ENCODE measurements at regions of chr17 and their contacts with region 1.

Region 1: DNA sequence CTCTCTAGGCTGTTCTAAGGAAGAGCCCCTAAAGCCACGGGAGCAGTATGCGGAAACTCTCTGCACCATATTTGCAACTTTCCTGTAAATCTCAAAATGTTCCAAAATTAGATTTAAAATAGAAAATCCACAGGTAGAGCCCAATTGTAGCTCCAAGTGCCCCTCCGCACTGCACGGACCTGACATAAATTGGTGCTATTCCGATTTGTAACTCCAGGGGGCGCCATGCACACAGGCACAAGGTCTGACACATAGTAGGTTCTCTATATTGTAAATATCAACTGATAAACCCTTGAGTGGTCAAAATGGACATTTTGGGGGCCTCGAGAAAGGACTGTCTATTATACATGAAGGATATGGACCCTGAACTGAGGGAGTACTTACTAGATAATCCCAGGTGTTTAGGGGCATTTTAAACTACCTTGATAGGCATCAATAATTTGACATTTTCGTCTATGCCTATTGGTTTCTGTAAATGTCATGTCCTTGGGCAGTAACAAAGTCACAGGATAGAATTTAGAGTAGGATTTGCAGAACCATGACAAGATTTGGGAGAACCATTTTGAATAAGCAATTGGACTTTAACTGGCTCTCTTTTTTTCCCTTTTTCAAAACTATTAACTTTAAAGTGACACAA is 36.6 kb upstream of the TMEM132E start:
- DNase-seq: no peak
- ATAC-seq: peak; percentile 79
- H3K4me3 ChIP-seq: no peak overlapping the region
- H3K27ac ChIP-seq: no peak overlapping the region
- H3K4me1 ChIP-seq: no peaks in the 10 kb centered on the region
- H3K27me3 ChIP-seq: peaks cover 24% of the 10 kb centered on the region
- CTCF ChIP-seq: peak; percentile 95

Region 2: GRCh38 chr17:34443619-34444469 is 99.0 kb before region 1 on chr17:
- CTCF ChIA-PET with region 1: no interaction called
- POLR2A ChIA-PET with region 1: no interaction called
- in situ Hi-C with region 1: no loop called
- intact Hi-C with region 1: no loop called
- DNase-seq: no peak
- ATAC-seq: peak; percentile 89
- H3K4me3 ChIP-seq: no peak overlapping the region
- H3K27ac ChIP-seq: no peak overlapping the region
- H3K4me1 ChIP-seq: no peaks in the 10 kb centered on the region
- H3K27me3 ChIP-seq: peaks cover 12% of the 10 kb centered on the region; the same call in 1 of the 2 replicates
- CTCF ChIP-seq: peak; percentile 72

Region 3: DNA sequence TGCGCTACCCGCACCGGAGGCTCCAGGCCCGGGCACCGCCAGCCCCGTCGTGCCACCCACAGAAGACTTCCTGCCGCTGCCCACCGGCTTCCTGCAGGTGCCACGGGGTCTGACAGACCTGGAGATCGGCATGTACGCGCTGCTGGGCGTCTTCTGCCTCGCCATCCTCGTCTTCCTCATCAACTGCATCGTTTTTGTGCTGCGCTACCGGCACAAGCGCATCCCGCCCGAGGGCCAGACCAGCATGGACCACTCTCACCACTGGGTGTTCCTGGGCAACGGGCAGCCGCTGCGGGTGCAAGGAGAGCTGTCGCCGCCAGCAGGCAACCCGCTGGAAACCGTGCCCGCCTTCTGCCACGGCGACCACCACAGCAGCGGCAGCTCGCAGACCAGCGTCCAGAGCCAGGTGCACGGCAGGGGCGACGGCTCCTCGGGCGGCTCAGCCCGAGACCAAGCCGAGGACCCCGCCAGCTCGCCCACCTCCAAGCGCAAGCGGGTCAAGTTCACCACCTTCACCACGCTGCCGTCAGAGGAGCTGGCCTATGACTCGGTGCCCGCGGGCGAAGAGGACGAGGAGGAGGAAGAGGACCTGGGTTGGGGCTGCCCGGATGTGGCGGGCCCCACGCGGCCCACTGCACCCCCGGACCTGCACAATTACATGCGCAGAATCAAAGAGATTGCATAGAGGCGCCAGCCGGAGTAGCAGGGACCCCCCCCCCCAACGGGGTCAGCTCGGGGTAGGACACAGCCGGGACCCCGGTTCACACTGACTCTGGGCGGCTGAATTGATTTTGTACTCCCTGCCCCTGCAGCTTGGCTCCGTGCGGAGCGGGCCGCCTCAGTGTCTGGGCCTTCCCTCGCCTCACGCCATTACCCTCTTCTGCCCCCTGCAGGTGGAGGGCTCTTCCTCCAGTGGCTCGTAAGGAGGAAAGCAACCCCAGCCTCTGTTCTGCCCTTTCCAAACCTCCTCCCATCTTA is 95.0 kb after region 1 on chr17:
- CTCF ChIA-PET with region 1: interaction called, 7 read pairs
- POLR2A ChIA-PET with region 1: no interaction called
- in situ Hi-C with region 1: no loop called
- intact Hi-C with region 1: loop called (anchors 1 kb)
- DNase-seq: peak; percentile 25
- ATAC-seq: peak; percentile 95
- H3K4me3 ChIP-seq: no peak overlapping the region
- H3K27ac ChIP-seq: no peak overlapping the region
- H3K4me1 ChIP-seq: no peaks in the 10 kb centered on the region
- H3K27me3 ChIP-seq: peaks cover 9% of the 10 kb centered on the region; the same call in 1 of the 2 replicates
- CTCF ChIP-seq: peak; percentile 92

Region 4: GRCh38 chr17:34726536-34727384 is 183.9 kb after region 1 on chr17:
- CTCF ChIA-PET with region 1: interaction called, 15 read pairs
- POLR2A ChIA-PET with region 1: no interaction called
- in situ Hi-C with region 1: no loop called
- intact Hi-C with region 1: no loop called
- DNase-seq: no peak
- ATAC-seq: no peak
- H3K4me3 ChIP-seq: no peak overlapping the region
- H3K27ac ChIP-seq: no peak overlapping the region
- H3K4me1 ChIP-seq: peaks cover under 1% of the 10 kb centered on the region; the same call in 1 of the 2 replicates
- H3K27me3 ChIP-seq: no peaks in the 10 kb centered on the region
- CTCF ChIP-seq: no peak

Region 5: GRCh38 chr17:34892461-34893249 is 349.8 kb after region 1 on chr17:
- CTCF ChIA-PET with region 1: no interaction called
- POLR2A ChIA-PET with region 1: no interaction called
- in situ Hi-C with region 1: no loop called
- intact Hi-C with region 1: loop called (anchors 1 kb)
- DNase-seq: no peak
- ATAC-seq: peak; percentile 83
- H3K4me3 ChIP-seq: no peak overlapping the region
- H3K27ac ChIP-seq: no peak overlapping the region
- H3K4me1 ChIP-seq: no peaks in the 10 kb centered on the region
- H3K27me3 ChIP-seq: peaks cover 3% of the 10 kb centered on the region
- CTCF ChIP-seq: peak; percentile 87

Region 6: GRCh38 chr17:34961093-34961911 is 418.5 kb after region 1 on chr17 and contains the starts of genes CCT6B and ZNF830:
- CTCF ChIA-PET with region 1: no interaction called
- POLR2A ChIA-PET with region 1: no interaction called
- in situ Hi-C with region 1: no loop called
- intact Hi-C with region 1: loop called (anchors 10 kb)
- DNase-seq: peak; percentile 78
- ATAC-seq: peak; percentile 98
- H3K4me3 ChIP-seq: peak within 1 kb of the TSS; percentile 98 to 99
- H3K27ac ChIP-seq: peak within 1 kb of the TSS; percentile 96
- H3K4me1 ChIP-seq: peaks cover 15% of the 10 kb centered on the region; the same call in 1 of the 2 replicates
- H3K27me3 ChIP-seq: no peaks in the 10 kb centered on the region; the same call in 1 of the 2 replicates
- CTCF ChIP-seq: no peak
- total RNA-seq, gene CCT6B: 1.5 TPM
- total RNA-seq, gene ZNF830: 17.5 TPM

Region 7: DNA sequence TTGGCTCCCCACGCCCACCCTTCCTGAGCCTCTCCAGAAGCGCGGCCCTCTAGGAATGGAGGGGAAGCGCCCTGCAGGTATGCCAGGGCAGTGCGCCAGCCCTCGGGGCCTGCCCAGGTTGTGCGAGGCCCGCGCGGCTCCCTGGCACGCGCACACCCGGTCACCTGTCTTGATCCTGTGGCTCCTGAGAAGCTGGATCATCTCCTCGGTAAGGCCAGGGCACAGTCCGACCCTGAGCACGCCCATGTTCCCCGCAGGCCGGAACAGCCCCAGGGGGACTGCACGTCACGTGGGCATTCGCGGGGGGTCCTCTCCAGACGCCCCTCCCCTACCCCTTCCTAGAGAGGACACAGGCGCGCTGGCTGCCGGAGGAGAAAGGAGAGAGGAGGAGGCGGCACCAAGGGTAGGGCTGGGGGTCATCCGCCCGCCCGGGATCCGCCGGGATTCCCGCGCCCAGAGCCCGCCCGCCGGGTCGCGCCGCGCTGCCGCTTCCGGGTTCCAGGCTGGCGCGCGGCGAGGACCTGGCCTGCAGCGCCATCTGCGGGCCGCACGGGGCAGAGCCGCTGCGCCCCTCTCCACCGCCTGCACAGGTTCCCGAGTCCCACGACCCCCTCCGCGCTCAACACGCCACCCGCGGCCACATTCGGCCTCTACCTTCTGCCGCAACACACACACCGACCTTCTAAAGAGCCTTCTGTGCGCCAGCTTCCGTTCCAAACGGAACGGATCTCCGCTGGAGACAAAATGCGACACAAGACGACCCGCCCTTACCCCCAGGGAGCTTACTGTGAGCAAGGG is 576.7 kb after region 1 on chr17 and contains the start of gene RAD51D:
- CTCF ChIA-PET with region 1: no interaction called
- POLR2A ChIA-PET with region 1: no interaction called
- in situ Hi-C with region 1: no loop called
- intact Hi-C with region 1: loop called (anchors 5 kb)
- DNase-seq: no peak
- ATAC-seq: peak; percentile 97
- H3K4me3 ChIP-seq: peak within 1 kb of the TSS; percentile 68 to 71
- H3K27ac ChIP-seq: peak within 1 kb of the TSS; percentile 81
- H3K4me1 ChIP-seq: peaks cover 11% of the 10 kb centered on the region; the same call in 1 of the 2 replicates
- H3K27me3 ChIP-seq: no peaks in the 10 kb centered on the region
- CTCF ChIP-seq: peak; percentile 98
- total RNA-seq, gene RAD51D: 25.9 TPM

Measured in Panc1 (cell line).